ENCODE measurements at regions of chr1 and their contacts with region 1.

Region 1: GRCh38 chr1:169485544-169486278 is at the start of gene SLC19A2:
- DNase-seq: peak; percentile 93
- H3K4me3 Mint-ChIP-seq: peak within 1 kb of the TSS; percentile 94
- H3K27ac Mint-ChIP-seq: peak within 1 kb of the TSS; percentile 89
- H3K4me1 Mint-ChIP-seq: peaks cover 67% of the 10 kb centered on the region
- H3K27me3 Mint-ChIP-seq: no peaks in the 10 kb centered on the region
- total RNA-seq, gene SLC19A2: 12.8 and 14.0 TPM in 2 replicates

Region 2: DNA sequence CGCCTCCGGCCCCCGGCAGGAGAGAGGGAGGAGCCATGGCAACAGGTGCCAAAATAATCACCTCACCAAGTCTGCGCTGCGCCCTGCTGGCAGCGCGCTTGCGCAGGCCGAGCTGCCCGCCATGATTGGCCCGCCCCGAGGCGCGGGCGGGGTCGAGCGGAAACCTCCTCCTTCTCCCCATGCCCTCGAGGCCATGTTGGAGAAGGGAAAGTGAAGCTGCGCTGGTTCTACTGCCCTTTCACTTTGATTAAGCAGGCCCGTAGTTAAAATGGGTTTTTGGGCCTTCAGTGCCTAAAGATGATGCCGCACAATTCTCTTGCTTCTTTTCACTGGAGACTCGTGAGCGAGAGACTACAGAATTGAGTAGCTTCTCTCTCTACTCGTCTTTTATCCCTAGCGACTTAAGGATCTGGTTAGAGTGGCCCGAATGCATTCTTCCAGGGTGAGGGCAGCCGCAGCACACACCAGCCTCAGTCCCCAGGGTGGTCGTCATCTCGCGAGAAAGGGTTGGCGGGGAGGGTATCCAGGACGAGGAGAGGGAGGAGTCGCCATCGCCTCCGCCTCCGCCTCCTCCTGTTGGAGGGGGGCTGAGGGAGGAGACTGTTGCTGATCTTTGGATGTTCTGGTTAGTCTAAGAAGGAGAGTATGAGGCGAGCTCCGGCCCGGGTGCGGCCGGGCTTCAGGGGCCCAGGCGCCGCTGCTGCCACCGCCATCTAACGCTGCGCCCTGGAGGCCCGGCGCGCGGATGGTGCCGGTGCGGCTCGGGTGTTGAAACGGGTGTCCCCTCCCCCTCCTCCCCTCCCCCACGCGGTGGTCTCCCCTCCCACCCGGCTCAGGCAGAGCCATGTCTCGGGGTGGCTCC is 1549.4 kb before region 1 on chr1 and contains the start of gene DCAF6:
- intact Hi-C with region 1: loop called (anchors 5 kb)
- DNase-seq: peak; percentile 98
- H3K4me3 Mint-ChIP-seq: peak within 1 kb of the TSS; percentile 91
- H3K27ac Mint-ChIP-seq: peak within 1 kb of the TSS; percentile 98
- H3K4me1 Mint-ChIP-seq: peaks cover 41% of the 10 kb centered on the region
- H3K27me3 Mint-ChIP-seq: no peaks in the 10 kb centered on the region
- total RNA-seq, gene DCAF6: 20.9 and 24.0 TPM in 2 replicates

Region 3: GRCh38 chr1:168408536-168409242 is 1077.0 kb before region 1 on chr1:
- intact Hi-C with region 1: loop called (anchors 10 kb)
- DNase-seq: peak; percentile 64
- H3K4me3 Mint-ChIP-seq: peak overlapping the region; percentile 24
- H3K27ac Mint-ChIP-seq: peak overlapping the region; percentile 86
- H3K4me1 Mint-ChIP-seq: peaks cover 42% of the 10 kb centered on the region
- H3K27me3 Mint-ChIP-seq: no peaks in the 10 kb centered on the region

Region 4: DNA sequence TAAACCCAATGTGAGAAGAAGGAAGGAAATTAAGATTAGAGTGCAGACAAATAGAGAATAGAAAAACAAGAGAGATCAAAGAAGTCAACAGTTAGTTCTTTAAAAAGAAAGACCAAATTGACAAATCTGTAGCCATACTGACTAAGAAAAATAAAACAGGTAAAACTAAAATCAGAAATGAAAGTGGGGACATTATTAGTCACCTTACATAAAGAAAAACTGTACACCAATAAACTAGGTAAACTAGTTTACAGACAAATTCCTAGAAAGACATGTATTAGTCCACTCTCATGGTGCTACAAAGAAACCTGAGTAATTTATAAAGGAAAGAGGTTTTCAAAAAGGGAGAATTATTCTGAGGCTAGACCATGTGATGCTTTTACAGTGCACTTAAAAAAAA is 95.4 kb before region 1 on chr1:
- intact Hi-C with region 1: loop called (anchors 1 kb)
- DNase-seq: no peak
- H3K4me3 Mint-ChIP-seq: no peak overlapping the region
- H3K27ac Mint-ChIP-seq: peak overlapping the region; percentile 29
- H3K4me1 Mint-ChIP-seq: peaks cover 21% of the 10 kb centered on the region
- H3K27me3 Mint-ChIP-seq: no peaks in the 10 kb centered on the region

Region 5: DNA sequence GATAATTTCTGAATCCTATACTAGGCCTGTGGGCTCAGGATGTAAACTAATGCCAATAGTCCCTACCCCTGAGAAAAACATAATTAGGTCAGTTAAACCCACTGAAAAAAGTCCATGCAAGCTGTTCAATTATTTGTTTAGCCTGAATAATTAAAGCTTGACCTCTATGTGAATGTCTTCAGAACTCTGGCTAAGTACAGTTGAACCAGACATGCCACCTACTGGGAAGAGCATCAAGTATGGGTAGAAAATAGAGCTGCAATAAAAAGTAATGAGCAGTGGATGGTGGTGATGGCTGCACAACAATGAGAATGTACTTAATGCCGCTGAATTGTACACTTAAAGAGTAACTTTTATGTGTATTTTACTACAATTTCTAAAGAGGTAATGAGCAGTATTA is 23.6 kb after region 1 on chr1:
- intact Hi-C with region 1: no loop called
- DNase-seq: no peak
- H3K4me3 Mint-ChIP-seq: no peak overlapping the region
- H3K27ac Mint-ChIP-seq: no peak overlapping the region
- H3K4me1 Mint-ChIP-seq: peaks cover 17% of the 10 kb centered on the region
- H3K27me3 Mint-ChIP-seq: no peaks in the 10 kb centered on the region

Region 6: GRCh38 chr1:169546087-169546995 is 60.6 kb after region 1 on chr1:
- intact Hi-C with region 1: loop called (anchors 1 kb)
- DNase-seq: peak; percentile 40
- H3K4me3 Mint-ChIP-seq: no peak overlapping the region
- H3K27ac Mint-ChIP-seq: no peak overlapping the region
- H3K4me1 Mint-ChIP-seq: peaks cover 9% of the 10 kb centered on the region
- H3K27me3 Mint-ChIP-seq: no peaks in the 10 kb centered on the region

Region 7: DNA sequence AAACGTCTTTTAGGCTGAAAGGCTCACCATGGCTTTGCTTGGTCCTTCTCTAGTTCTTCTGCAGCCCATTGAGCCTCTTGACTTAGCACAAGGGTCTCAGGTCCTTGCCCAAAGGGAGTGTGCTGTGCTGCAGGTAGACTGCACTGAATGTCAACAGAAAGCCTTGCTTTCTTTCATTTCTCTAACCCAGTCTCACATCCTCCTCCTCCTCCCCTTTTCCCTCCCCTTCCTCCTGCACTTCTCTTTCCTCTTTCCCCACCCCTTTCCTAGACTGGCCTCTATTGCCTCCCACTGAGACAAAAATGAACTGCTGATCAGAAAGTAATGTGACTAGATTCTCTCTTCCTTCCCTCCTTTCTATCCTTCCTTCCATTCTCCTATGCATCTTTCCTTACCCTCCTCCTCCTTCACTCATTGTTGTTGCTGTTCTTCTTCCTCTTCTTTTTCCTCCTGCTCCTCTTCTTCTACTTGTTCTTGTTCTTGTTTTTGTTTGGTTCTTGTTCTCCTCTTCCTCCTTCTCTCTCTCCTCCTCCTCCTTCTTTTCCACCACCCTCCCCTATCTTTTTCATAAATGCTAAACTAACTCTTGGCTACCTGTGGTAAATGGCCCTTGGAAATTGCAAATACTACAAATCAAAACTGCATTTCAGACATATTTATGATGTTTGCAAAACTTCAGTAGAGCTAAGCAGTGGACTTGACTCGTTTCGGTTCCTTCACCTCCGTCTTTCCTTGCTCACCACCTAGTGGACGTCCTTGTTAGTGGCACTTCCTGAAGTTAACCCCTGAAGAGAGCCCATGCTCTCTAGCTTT is 226.0 kb after region 1 on chr1 and contains the start of gene SELL:
- intact Hi-C with region 1: loop called (anchors 1 kb)
- DNase-seq: peak; percentile 69
- H3K4me3 Mint-ChIP-seq: peak within 1 kb of the TSS; percentile 93
- H3K27ac Mint-ChIP-seq: peak within 1 kb of the TSS; percentile 86
- H3K4me1 Mint-ChIP-seq: peaks cover 40% of the 10 kb centered on the region
- H3K27me3 Mint-ChIP-seq: peaks cover 18% of the 10 kb centered on the region
- total RNA-seq, gene SELL: 115 and 117 TPM in 2 replicates

Region 8: DNA sequence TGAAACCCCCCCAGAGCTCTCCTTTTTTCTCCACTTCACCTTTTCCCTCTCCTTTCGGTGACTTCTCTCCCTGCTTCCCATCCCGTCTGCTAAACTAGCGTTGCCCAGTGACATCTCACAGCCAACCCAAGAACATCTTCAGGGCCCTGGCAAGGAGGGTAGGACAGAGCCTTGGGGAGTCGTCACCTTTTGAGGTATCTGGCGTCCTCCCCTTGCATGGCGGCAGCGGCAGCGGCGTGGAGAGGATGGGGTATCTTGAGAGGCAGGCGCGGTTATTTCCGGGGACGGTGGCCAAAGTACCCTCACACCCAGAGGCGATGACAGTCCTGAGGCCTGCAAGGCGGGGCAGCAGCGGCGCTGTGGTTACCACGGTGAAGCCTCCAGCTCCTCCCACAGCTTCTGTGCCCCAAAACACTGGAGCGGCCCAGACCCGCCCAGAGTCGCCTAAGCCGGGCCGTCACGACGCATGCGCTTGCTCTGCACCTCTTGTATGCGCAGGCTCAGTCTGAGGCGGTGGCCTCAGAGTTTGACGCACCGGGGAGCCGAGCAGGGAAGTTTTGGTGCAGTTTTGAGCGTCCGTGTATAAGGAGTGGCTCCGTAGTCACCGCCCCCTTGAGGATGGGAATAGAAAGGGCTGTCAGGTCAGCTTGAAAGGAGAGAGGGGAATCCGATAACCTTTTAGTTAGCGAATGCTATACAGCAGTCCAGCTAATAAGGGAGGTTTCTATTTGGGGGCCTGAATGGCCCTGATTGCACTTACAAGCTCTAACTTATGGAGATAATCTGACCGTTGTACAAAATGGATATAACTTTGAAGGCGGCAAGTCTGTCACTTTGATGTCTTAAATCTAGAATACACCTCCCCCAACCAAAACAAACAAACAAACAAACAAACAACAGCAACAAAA is 588.8 kb after region 1 on chr1 and contains the start of gene KIFAP3:
- intact Hi-C with region 1: loop called (anchors 5 kb)
- DNase-seq: peak; percentile 95
- H3K4me3 Mint-ChIP-seq: peak within 1 kb of the TSS; percentile 95
- H3K27ac Mint-ChIP-seq: peak within 1 kb of the TSS; percentile 96
- H3K4me1 Mint-ChIP-seq: peaks cover 45% of the 10 kb centered on the region
- H3K27me3 Mint-ChIP-seq: no peaks in the 10 kb centered on the region
- total RNA-seq, gene KIFAP3: 12.9 and 13.5 TPM in 2 replicates

Measured in activated T-helper 1 cell treated with anti-CD3 and anti-CD28 coated beads, Interleukin-12 subunit alpha, Interleukin-12 subunit beta, Interleukin-2, Interleukin-4 antibody, amounts not matched to agents 30 ng/mL and 10 ng/mL and 1 ng/mL, durations not matched to agents 14 hours and 24 hours and 36 hours (primary cell).